HCT116 (cell line): ENCODE measurements at regions of chr15 and their contacts with region 1.

Region 1: GRCh38 chr15:55526559-55527036 is 18.6 kb upstream of the DNAAF4 start:
- DNase-seq: peak; percentile 32
- ATAC-seq: peak; percentile 97
- H3K4me3 ChIP-seq: no peak overlapping the region
- H3K27ac ChIP-seq: no peak overlapping the region
- H3K4me1 ChIP-seq: peaks cover 0 to 5% of the 10 kb centered on the region in 2 experiments; a peak in 2 of 4 replicates
- H3K27me3 ChIP-seq: no peaks in the 10 kb centered on the region
- CTCF ChIP-seq: peak; percentile 60 to 82 (median 78); a peak in 5 of 6 replicates
- POLR2A ChIP-seq: no peak
- RAD21 ChIP-seq: peak; percentile 60

Region 2: GRCh38 chr15:55372701-55373440 is 153.7 kb before region 1 on chr15:
- CTCF ChIA-PET with region 1: no interaction called
- POLR2A ChIA-PET with region 1: no interaction called
- RAD21 ChIA-PET with region 1: no interaction called
- intact Hi-C with region 1: no loop called
- DNase-seq: no peak
- ATAC-seq: no peak
- H3K4me3 ChIP-seq: no peak overlapping the region
- H3K27ac ChIP-seq: no peak overlapping the region
- H3K4me1 ChIP-seq: no peaks in the 10 kb centered on the region
- H3K27me3 ChIP-seq: no peaks in the 10 kb centered on the region
- CTCF ChIP-seq: no peak
- POLR2A ChIP-seq: no peak
- RAD21 ChIP-seq: no peak

Region 3: DNA sequence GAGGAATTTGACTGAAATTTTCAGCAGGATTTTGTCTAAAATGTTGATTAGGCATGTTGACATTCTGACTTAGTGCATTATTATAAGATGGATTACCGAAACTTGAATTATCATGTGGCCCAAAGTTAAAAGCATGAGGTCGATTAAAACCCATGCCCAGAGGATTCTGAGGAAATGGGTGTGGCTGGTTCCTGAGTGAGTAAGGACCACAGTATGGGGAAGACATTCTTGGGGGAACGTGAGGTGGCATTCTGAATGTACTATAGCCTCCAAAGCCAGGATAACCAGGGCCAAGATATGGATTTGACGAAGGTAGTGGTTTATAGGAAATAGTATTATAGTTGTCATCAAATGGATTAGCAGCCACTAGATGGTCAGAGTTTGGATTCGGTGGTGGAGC is 20.1 kb after region 1 on chr15:
- CTCF ChIA-PET with region 1: interaction called, 12 read pairs
- POLR2A ChIA-PET with region 1: no interaction called
- RAD21 ChIA-PET with region 1: no interaction called
- intact Hi-C with region 1: no loop called
- DNase-seq: no peak
- ATAC-seq: no peak
- H3K4me3 ChIP-seq: no peak overlapping the region
- H3K27ac ChIP-seq: no peak overlapping the region
- H3K4me1 ChIP-seq: peaks cover 0 to 7% of the 10 kb centered on the region in 2 experiments; a peak in 2 of 4 replicates
- H3K27me3 ChIP-seq: no peaks in the 10 kb centered on the region
- CTCF ChIP-seq: no peak
- POLR2A ChIP-seq: no peak
- RAD21 ChIP-seq: no peak

Region 4: GRCh38 chr15:55637086-55637485 is 110.5 kb after region 1 on chr15:
- CTCF ChIA-PET with region 1: interaction called, 14 read pairs
- POLR2A ChIA-PET with region 1: no interaction called
- RAD21 ChIA-PET with region 1: no interaction called
- intact Hi-C with region 1: loop called (anchors 1 kb)
- DNase-seq: no peak
- ATAC-seq: no peak
- H3K4me3 ChIP-seq: no peak overlapping the region
- H3K27ac ChIP-seq: no peak overlapping the region
- H3K4me1 ChIP-seq: no peaks in the 10 kb centered on the region
- H3K27me3 ChIP-seq: no peaks in the 10 kb centered on the region
- CTCF ChIP-seq: no peak
- POLR2A ChIP-seq: no peak
- RAD21 ChIP-seq: no peak

Region 5: GRCh38 chr15:55799291-55800212 is 273.0 kb after region 1 on chr15:
- CTCF ChIA-PET with region 1: interaction called, 3 read pairs
- POLR2A ChIA-PET with region 1: no interaction called
- RAD21 ChIA-PET with region 1: no interaction called
- intact Hi-C with region 1: loop called (anchors 10 kb)
- DNase-seq: peak; percentile 32
- ATAC-seq: peak; percentile 86
- H3K4me3 ChIP-seq: no peak overlapping the region
- H3K27ac ChIP-seq: no peak overlapping the region
- H3K4me1 ChIP-seq: peaks cover 0 to 8% of the 10 kb centered on the region in 2 experiments; a peak in 2 of 4 replicates
- H3K27me3 ChIP-seq: no peaks in the 10 kb centered on the region
- CTCF ChIP-seq: peak; percentile 72 to 83 (median 74)
- POLR2A ChIP-seq: no peak
- RAD21 ChIP-seq: peak; percentile 82